IMR-90 (cell line): ENCODE measurements at regions of chr5 and their contacts with region 1.

Region 1: DNA sequence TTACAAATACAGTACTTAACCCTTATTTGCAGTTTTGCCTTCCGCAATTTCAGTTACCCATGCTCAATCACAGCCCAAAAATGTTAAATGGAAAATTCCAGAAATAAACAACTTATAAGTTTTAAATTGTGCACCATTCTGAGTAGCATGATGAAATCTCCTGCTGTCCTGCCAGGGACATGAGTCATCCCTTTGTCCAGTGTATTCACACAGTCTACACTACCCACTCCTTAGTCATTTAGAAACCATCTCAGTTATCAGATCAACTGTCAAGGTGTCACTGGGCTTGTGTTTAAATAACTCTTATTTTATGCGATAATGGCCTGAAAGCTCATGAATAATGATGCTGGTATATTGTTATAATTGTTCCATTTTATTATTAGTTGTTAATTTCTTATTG is 95.8 kb downstream of the PLCXD3 start:
- DNase-seq: peak; percentile 96
- ATAC-seq: peak; percentile 78
- H3K4me3 ChIP-seq: no peak overlapping the region
- H3K27ac ChIP-seq: no peak overlapping the region
- H3K4me1 ChIP-seq: peaks cover 4% of the 10 kb centered on the region
- H3K27me3 ChIP-seq: no peaks in the 10 kb centered on the region
- CTCF ChIP-seq: no peak
- POLR2A ChIP-seq: no peak
- RAD21 ChIP-seq: no peak

Region 2: GRCh38 chr5:41094873-41095272 is 319.7 kb before region 1 on chr5:
- CTCF ChIA-PET with region 1: no interaction called
- POLR2A ChIA-PET with region 1: no interaction called
- dilution Hi-C with region 1: no loop called
- in situ Hi-C with region 1: no loop called
- intact Hi-C with region 1: no loop called
- DNase-seq: no peak
- ATAC-seq: peak; percentile 32; the same call in 1 of the 2 replicates
- H3K4me3 ChIP-seq: no peak overlapping the region
- H3K27ac ChIP-seq: no peak overlapping the region
- H3K4me1 ChIP-seq: peaks cover 3% of the 10 kb centered on the region
- H3K27me3 ChIP-seq: no peaks in the 10 kb centered on the region
- CTCF ChIP-seq: no peak
- POLR2A ChIP-seq: no peak
- RAD21 ChIP-seq: no peak

Region 3: GRCh38 chr5:41275813-41276512 is 138.6 kb before region 1 on chr5:
- CTCF ChIA-PET with region 1: no interaction called
- POLR2A ChIA-PET with region 1: no interaction called
- dilution Hi-C with region 1: no loop called
- in situ Hi-C with region 1: no loop called
- intact Hi-C with region 1: loop called (anchors 5 kb)
- DNase-seq: no peak
- ATAC-seq: no peak
- H3K4me3 ChIP-seq: no peak overlapping the region
- H3K27ac ChIP-seq: no peak overlapping the region
- H3K4me1 ChIP-seq: peaks cover 6% of the 10 kb centered on the region; the same call in 1 of the 2 replicates
- H3K27me3 ChIP-seq: no peaks in the 10 kb centered on the region
- CTCF ChIP-seq: no peak
- POLR2A ChIP-seq: no peak
- RAD21 ChIP-seq: no peak

Region 4: GRCh38 chr5:41433552-41434181 is 19.1 kb after region 1 on chr5:
- CTCF ChIA-PET with region 1: no interaction called
- POLR2A ChIA-PET with region 1: no interaction called
- dilution Hi-C with region 1: no loop called
- in situ Hi-C with region 1: no loop called
- intact Hi-C with region 1: no loop called
- DNase-seq: peak; percentile 11
- ATAC-seq: no peak
- H3K4me3 ChIP-seq: no peak overlapping the region
- H3K27ac ChIP-seq: no peak overlapping the region
- H3K4me1 ChIP-seq: no peaks in the 10 kb centered on the region
- H3K27me3 ChIP-seq: peaks cover 2% of the 10 kb centered on the region; the same call in 1 of the 2 replicates
- CTCF ChIP-seq: peak; percentile 43
- POLR2A ChIP-seq: no peak
- RAD21 ChIP-seq: peak; percentile 33

Region 5: DNA sequence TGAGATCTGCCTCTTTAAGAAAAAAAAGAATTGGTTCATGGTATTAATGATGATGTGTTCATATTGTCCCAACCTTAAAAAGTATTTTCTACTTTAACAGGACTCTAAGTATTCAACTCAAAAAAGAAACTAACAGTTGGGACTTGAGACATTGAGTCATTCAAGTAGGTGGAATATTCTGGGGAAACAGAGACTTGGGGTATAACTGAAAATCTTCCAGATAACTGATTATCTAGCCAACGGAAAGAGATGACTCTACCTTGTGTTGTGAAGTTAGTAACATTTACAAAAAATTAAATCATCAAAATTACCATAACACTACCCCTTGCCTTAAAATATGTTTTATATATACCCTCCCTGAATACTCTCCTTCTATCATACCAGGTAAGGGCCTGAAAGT is 436.5 kb after region 1 on chr5:
- CTCF ChIA-PET with region 1: no interaction called
- POLR2A ChIA-PET with region 1: no interaction called
- dilution Hi-C with region 1: no loop called
- in situ Hi-C with region 1: no loop called
- intact Hi-C with region 1: loop called (anchors 5 kb)
- DNase-seq: no peak
- ATAC-seq: no peak
- H3K4me3 ChIP-seq: no peak overlapping the region
- H3K27ac ChIP-seq: no peak overlapping the region
- H3K4me1 ChIP-seq: no peaks in the 10 kb centered on the region
- H3K27me3 ChIP-seq: no peaks in the 10 kb centered on the region
- CTCF ChIP-seq: no peak
- POLR2A ChIP-seq: no peak
- RAD21 ChIP-seq: no peak